ENCODE measurements at regions of chr1 and their contacts with region 1.

Region 1: GRCh38 chr1:209674957-209675564 is at the start of gene G0S2:
- DNase-seq: peak; percentile 88
- H3K4me3 ChIP-seq: peak within 1 kb of the TSS; percentile 47 to 55 (median 50)
- H3K27ac ChIP-seq: peak within 1 kb of the TSS; percentile 57 to 64 (median 62)
- H3K4me1 ChIP-seq: peaks cover 0 to 18% (median 13%) of the 10 kb centered on the region in 4 donors
- H3K27me3 ChIP-seq: no peaks in the 10 kb centered on the region
- CTCF ChIP-seq: no peak
- EP300 ChIP-seq: no peak
- POLR2A ChIP-seq: peak in 1 of 2 donors; percentile 39
- total RNA-seq, gene G0S2: 19.3 to 33.5 (median 21.5) TPM

Region 2: DNA sequence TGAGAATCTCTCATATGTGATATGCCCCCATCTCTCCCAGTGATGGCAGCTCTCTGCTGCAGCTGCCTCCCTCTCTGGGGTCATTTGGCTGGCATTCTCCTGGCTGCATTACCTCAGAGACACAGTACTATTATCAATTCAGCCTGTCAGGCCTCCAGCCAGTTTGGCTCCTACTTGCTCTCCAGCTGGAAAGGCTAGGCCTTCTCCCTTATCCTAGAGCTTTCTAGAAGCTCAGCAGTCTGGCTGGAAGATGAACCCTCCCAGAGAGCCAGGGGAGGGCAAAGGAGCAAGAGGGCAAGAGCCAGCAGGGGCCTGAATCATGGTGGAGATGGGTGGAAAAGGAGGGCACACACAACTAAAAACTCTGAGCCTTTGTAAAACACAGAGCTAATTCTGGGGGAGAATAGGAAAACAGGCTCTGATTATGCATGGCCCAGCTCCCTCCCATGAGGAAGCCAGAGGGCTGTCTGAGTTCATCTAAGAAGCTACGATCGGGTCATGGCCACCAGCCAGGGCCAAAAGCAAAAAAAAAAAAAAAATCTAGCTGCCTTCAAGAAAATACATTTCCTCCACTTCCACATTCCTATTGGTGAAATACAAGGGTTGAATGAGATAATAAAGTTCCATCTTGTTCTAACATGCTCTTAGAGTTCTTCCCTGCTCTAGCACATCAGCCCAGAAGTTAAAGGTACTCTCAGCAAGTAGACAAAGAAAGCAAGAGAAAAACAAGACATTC is 31.6 kb before region 1 on chr1:
- intact Hi-C with region 1: loop called (anchors 2 kb)
- DNase-seq: no peak
- H3K4me3 ChIP-seq: no peak overlapping the region
- H3K27ac ChIP-seq: peak overlapping the region; percentile 54 to 82 (median 72)
- H3K4me1 ChIP-seq: peaks cover 0 to 52% (median 41%) of the 10 kb centered on the region in 4 donors
- H3K27me3 ChIP-seq: no peaks in the 10 kb centered on the region
- CTCF ChIP-seq: no peak
- EP300 ChIP-seq: no peak
- POLR2A ChIP-seq: no peak

Measured in sigmoid colon (tissue), 7 donors.